Activated T-helper 2 cell treated with anti-CD3 and anti-CD28 coated beads, Interferon-gamma antibody, Interleukin-2, Interleukin-4, amounts not matched to agents 10 μg/mL and 5 μg/mL and 100 μg/mL, durations not matched to agents 14 hours and 24 hours and 36 hours (primary cell): ENCODE measurements at regions of chr4 and their contacts with region 1.

Region 1: DNA sequence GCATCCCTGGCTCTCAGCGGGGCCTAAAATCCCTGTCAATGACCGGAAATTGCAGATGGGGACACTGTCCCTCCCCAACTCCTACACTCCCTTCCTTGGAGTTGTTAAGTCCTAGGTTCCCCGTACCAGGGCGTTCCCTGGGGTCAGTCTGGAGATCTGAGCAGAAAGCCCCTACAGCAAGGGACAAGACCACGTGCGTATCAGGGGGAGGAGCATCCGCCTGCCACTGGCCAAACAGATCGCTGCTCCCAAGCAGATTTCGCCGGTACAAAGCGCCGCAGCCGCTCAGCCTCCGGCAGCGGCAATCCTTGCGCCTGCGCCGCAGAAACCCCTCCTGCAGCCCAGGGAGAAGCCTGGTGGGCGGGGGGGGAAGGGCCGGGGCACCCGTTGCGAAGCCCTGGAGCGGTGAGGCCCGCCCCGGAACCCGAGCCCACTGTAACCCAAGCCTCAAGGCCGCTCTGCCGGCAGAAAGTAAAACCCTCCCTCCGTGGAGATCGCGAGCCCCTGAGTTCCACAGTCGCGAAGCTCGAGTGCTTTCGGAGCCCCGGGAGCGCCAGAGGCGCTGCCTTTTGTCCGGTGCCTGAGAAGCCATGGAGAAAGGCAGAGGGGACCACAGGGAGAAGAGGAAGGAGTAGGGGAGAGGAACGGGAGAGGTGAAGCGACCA is 2.7 kb downstream of the CRMP1 start:
- DNase-seq: no peak
- H3K4me3 Mint-ChIP-seq: no peak overlapping the region
- H3K27ac Mint-ChIP-seq: no peak overlapping the region
- H3K4me1 Mint-ChIP-seq: peaks cover 1% of the 10 kb centered on the region
- H3K27me3 Mint-ChIP-seq: peaks cover 65% of the 10 kb centered on the region

Region 2: DNA sequence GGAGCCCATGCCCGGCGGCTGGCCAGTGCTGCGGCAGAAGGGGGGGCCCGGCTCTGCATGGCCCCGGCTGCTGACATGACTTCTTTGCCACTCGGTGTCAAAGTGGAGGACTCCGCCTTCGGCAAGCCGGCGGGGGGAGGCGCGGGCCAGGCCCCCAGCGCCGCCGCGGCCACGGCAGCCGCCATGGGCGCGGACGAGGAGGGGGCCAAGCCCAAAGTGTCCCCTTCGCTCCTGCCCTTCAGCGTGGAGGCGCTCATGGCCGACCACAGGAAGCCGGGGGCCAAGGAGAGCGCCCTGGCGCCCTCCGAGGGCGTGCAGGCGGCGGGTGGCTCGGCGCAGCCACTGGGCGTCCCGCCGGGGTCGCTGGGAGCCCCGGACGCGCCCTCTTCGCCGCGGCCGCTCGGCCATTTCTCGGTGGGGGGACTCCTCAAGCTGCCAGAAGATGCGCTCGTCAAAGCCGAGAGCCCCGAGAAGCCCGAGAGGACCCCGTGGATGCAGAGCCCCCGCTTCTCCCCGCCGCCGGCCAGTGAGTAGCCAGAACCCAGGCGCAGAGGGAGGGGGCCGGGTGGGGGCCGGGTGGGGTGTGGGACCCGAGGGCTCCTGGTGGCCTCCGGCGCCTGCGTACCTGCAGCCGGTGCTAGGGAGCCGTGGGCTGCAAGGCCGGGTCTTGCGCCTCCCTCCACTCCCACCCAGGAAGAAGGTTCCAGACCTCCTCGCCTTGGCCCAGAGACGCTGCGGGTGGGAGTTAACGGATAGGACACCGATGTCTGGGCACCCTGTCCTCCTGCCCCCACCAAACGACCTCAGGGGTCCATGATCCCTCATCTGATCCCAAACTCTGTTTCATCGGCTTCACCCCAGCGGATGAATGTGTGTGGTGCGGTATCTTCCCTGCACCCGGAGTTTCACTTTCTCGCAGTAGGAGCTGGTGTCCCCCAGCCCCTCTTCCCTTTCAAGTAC is 1030.1 kb before region 1 on chr4:
- intact Hi-C with region 1: loop called (anchors 5 kb)
- DNase-seq: no peak
- H3K4me3 Mint-ChIP-seq: peak overlapping the region; percentile 60
- H3K27ac Mint-ChIP-seq: peak overlapping the region; percentile 22
- H3K4me1 Mint-ChIP-seq: peaks cover 9% of the 10 kb centered on the region
- H3K27me3 Mint-ChIP-seq: peaks cover 77% of the 10 kb centered on the region

Region 3: GRCh38 chr4:4869731-4870571 is 1020.2 kb before region 1 on chr4:
- intact Hi-C with region 1: loop called (anchors 5 kb)
- DNase-seq: no peak
- H3K4me3 Mint-ChIP-seq: no peak overlapping the region
- H3K27ac Mint-ChIP-seq: no peak overlapping the region
- H3K4me1 Mint-ChIP-seq: no peaks in the 10 kb centered on the region
- H3K27me3 Mint-ChIP-seq: peaks cover 66% of the 10 kb centered on the region

Region 4: DNA sequence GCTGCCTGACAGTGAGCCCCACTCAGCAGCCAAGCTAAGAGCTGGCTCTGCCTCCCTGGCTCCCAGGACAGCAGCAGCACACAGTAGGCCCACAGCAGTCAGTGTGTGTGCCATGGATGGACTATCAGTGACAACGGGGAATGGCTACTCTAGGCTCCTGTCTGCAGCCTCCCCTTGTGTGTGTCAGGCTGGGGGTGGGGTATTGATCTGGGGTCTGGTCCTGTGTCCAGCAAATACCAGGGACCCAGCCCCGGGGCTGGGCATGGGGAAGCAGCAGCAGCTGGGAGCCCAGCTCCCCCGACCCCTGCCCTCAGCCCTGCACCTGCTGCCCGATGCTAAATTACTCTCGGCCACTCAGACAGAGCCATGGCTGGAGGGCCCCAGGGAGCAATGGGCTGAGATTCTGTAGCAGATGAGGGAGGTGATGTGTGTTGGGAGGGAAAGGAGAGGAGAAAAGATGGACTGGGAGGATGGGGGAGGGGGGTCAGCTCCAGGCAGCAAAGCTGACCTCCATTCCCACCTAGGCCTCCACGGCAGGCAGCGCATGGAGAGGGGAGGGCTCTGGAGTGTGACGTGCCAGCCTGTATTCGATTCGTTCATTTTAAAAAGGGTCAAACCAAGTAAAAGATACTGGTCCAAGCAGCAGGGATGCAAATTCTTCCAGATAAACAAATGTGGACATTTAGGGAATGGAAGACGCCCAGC is 64.0 kb after region 1 on chr4:
- intact Hi-C with region 1: no loop called
- DNase-seq: no peak
- H3K4me3 Mint-ChIP-seq: no peak overlapping the region
- H3K27ac Mint-ChIP-seq: no peak overlapping the region
- H3K4me1 Mint-ChIP-seq: peaks cover 5% of the 10 kb centered on the region
- H3K27me3 Mint-ChIP-seq: peaks cover 5% of the 10 kb centered on the region